Heart left ventricle (tissue), 16 donors: ENCODE measurements at regions of chr1 and their contacts with region 1.

Region 1: GRCh38 chr1:155017041-155017945 is 14.7 kb downstream of the ZBTB7B start:
- DNase-seq: peak; percentile 86 to 94 (median 91)
- ATAC-seq: peak; percentile 85 to 94 (median 90)
- H3K4me3 ChIP-seq: peak overlapping the region; percentile 1 to 69 (median 56)
- H3K27ac ChIP-seq: peak overlapping the region; percentile 63 to 91 (median 84)
- H3K4me1 ChIP-seq: peaks cover 5 to 44% (median 24%) of the 10 kb centered on the region in 12 donors
- H3K27me3 ChIP-seq: no peaks in the 10 kb centered on the region
- CTCF ChIP-seq: peak; percentile 97 to 100 (median 98)
- POLR2A ChIP-seq: peak in 1 of 2 donors; percentile 52

Region 2: GRCh38 chr1:154955718-154956543 is 61.4 kb before region 1 on chr1 and contains the start of gene PBXIP1:
- intact Hi-C with region 1: loop called in 3 of 10 experiments (anchors 2 to 5 kb)
- DNase-seq: peak; percentile 68 to 89 (median 79)
- ATAC-seq: peak; percentile 79 to 90 (median 82)
- H3K4me3 ChIP-seq: peak within 1 kb of the TSS; percentile 38 to 82 (median 61)
- H3K27ac ChIP-seq: peak within 1 kb of the TSS; percentile 59 to 85 (median 79)
- H3K4me1 ChIP-seq: peaks cover 8 to 74% (median 48%) of the 10 kb centered on the region in 12 donors
- H3K27me3 ChIP-seq: no peaks in the 10 kb centered on the region
- CTCF ChIP-seq: peak in 8 of 12 donors; percentile 6 to 45 (median 23)
- POLR2A ChIP-seq: peak in 1 of 2 donors; percentile 47
- total RNA-seq, gene PBXIP1: 38.2 to 70.4 (median 51.7) TPM

Region 3: DNA sequence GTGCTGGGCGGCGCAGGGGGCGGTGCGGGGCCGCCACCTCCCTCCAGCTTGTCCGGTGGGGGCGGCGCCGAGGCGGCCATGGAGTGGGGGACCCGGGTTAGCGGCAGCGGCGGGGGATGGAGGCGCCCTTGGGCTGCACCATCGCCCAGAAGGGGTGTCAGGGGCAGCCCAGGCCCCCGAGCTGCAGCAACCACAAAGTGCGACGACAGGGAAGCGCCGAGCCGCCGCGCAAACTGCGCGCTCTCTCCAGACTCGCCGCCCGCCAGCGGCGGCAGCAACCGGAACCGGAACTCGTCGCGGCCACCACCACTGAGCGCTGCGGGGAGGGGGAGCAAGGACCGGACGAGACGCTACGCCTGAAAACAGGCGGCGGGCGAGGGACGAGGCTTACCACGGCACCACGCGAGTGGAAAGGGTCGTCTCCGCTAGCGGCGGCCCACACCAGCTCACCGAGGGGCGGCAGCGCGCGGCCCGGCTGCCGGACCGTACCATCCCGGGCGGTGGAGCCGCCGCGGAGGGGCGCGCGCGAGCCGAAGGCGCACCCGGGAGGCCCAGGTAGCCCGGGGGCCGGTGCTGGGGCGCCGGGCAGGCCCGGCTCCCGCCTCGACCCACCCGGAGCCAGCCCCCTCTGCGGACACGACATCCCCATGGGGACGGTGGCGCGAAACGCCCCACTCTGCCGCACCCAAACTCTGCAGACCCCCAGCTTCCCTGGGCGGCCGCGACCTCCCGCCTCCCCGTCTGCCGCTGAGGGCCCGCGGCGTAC is 55.6 kb before region 1 on chr1 and contains the start of gene PYGO2:
- intact Hi-C with region 1: loop called in 6 of 10 experiments (anchors 2 to 5 kb)
- DNase-seq: peak; percentile 82 to 92 (median 85)
- ATAC-seq: peak; percentile 67 to 89 (median 86)
- H3K4me3 ChIP-seq: peak within 1 kb of the TSS; percentile 80 to 99 (median 89)
- H3K27ac ChIP-seq: peak within 1 kb of the TSS; percentile 94 to 100 (median 99)
- H3K4me1 ChIP-seq: peaks cover 1 to 44% (median 23%) of the 10 kb centered on the region in 12 donors
- H3K27me3 ChIP-seq: no peaks in the 10 kb centered on the region
- CTCF ChIP-seq: peak; percentile 22 to 95 (median 68)
- POLR2A ChIP-seq: peak in 1 of 2 donors; percentile 84
- total RNA-seq, gene PYGO2: 10.7 to 19.2 (median 16.3) TPM

Region 4: GRCh38 chr1:155050560-155051341 is 33.5 kb after region 1 on chr1 and contains the start of gene ADAM15:
- intact Hi-C with region 1: loop called in 2 of 10 experiments (anchors 2 to 5 kb)
- DNase-seq: peak; percentile 86 to 94 (median 86)
- ATAC-seq: peak; percentile 43 to 90 (median 72)
- H3K4me3 ChIP-seq: peak within 1 kb of the TSS; percentile 54 to 99 (median 86)
- H3K27ac ChIP-seq: peak within 1 kb of the TSS; percentile 86 to 99 (median 94)
- H3K4me1 ChIP-seq: peaks cover 0 to 43% (median 23%) of the 10 kb centered on the region in 12 donors
- H3K27me3 ChIP-seq: no peaks in the 10 kb centered on the region
- CTCF ChIP-seq: peak; percentile 85 to 97 (median 92)
- POLR2A ChIP-seq: no peak
- total RNA-seq, gene ADAM15: 55.8 to 199 (median 67.5) TPM